HAP-1 (cell line): ENCODE measurements at regions of chr6 and their contacts with region 1.

Region 1: DNA sequence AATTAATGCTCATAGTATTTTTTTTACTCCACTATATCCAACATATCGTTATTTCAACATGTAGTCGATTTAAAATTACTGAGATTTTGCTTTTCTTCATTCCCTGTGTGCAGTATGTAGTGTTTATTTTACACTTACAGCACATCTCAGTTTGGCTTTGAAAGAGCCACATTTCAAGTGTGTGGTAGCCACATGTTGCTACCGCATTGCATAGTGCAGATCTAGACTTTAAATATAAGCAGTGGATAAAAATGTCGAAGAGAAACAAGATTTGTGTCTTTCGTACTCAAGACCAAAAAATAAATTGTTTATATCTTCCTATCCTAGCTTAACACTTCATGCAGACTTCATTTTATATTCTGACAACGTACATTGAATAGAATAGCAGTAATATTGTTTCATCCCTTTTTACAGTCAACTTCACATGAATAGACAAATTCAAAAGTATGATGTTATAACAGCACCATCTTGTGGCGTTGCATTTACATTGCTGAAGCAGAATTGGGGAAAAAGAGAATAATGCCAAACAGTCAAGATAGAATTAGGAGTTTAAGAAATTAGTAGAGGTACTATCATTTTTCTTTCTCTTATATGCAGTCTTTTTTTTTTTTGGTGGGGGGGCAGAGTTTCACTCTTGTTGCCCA is 29.9 kb downstream of the FBXO5 start:
- DNase-seq: peak in 1 of 2 experiments; percentile 40
- H3K4me3 ChIP-seq: no peak overlapping the region
- H3K4me1 ChIP-seq: peaks cover 5% of the 10 kb centered on the region; the same call in 1 of the 2 replicates
- H3K27me3 ChIP-seq: no peaks in the 10 kb centered on the region

Region 2: GRCh38 chr6:152428126-152428525 is 524.9 kb before region 1 on chr6:
- in situ Hi-C with region 1: no loop called
- DNase-seq: no peak
- H3K4me3 ChIP-seq: no peak overlapping the region
- H3K4me1 ChIP-seq: no peaks in the 10 kb centered on the region
- H3K27me3 ChIP-seq: peaks cover 9% of the 10 kb centered on the region

Region 3: DNA sequence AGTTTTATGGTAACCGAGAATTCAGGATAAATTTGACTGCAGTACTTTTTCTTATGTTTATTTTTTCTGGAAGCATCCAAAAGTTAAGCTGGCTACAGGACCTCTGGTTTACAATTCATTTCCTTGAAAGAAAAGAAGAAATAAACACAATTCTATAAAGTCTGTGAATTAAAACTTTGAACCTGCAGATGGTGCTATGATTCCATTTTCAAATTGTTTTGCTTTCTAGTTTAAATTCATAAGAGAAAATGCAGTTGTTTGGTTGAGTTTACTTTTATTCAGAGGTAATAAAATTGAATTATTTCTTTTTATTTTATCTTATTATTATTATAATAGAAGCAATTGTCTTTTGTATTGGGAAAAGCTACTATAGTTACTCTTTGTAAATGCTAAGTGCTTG is 204.1 kb before region 1 on chr6:
- in situ Hi-C with region 1: loop called (anchors 25 kb)
- DNase-seq: no peak
- H3K4me3 ChIP-seq: no peak overlapping the region
- H3K4me1 ChIP-seq: 0 out of 2 replicates have a peak, but pooled peaks cover 3% of the 10 kb centered on the region
- H3K27me3 ChIP-seq: no peaks in the 10 kb centered on the region

Region 4: GRCh38 chr6:152863618-152864326 is 89.2 kb before region 1 on chr6:
- in situ Hi-C with region 1: loop called (anchors 10 kb)
- DNase-seq: peak; percentile 52 to 81
- H3K4me3 ChIP-seq: no peak overlapping the region
- H3K4me1 ChIP-seq: no peaks in the 10 kb centered on the region
- H3K27me3 ChIP-seq: 0 out of 2 replicates have a peak, but pooled peaks cover 2% of the 10 kb centered on the region